Head of caudate nucleus (tissue), 42 donors: ENCODE measurements at regions of chr4 and their contacts with region 1.

Region 1: DNA sequence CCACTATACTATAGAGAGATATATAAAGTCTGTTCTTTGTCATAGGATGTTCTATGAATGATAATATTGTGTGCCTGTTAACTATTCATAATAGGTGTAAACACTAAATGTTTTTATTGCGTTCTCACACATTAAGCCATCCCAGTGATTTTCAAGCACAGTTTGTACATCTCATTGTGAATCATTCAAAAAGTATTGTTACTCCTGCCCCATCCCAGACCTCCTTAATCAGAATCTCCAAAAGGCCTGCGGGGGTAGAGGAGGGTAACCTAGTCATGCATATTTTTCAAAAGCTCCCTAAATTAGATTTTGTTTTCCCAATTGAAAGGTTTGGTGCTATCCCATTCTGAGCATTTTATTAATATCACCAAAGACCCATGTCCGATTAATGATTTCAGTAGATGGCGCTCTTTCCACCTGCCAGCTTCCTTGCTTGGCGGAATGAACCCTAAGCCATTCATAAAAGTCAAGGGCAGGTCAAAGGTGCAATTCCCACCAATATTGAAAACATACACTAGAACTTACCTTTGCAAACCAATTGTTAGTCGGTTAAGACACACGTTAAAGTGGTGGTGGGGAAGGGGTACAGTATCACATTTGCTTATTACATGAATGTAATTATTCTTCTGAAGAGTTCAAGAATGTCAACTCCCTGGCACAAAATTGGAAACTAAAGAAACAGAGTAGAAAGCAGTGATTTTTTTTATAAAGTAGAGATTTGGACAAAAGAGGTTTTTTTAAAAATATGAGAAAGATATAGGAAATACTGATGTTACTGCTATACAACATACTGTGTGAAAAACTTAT is 5.8 kb upstream of the TET2 start:
- DNase-seq: peak in 25 of 42 donors; percentile 14 to 79 (median 40)

Region 2: DNA sequence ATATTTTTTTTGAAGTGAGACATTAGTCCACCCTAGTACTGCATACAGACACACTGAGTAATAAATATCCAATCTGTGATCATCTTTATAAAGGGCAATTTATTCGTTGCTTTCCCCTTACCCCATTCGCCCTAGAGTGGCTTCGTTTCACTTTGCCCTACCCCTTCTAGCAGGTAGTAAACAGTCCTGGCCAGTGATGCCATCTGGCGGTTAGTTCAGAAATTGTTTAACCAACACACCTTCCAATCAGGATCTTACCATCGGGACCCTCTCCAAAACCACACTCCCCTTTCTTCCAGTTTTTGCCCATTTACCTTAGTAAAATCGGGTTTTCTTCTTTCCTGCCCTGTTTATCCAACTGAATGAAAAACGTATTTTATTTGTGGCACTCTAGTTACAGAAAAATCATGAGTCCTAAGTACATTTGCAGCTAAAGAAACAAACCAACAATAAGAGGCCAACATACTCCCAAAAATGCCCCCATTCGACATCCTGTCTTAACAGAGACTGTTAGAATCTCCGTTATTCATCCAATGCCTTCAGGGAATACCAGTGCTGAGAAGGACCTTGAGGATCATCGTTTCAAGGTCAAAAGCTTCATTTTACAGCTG is 330.8 kb after region 1 on chr4:
- intact Hi-C with region 1: loop called (anchors 2 kb)
- DNase-seq: peak in 41 of 42 donors; percentile 13 to 90 (median 72)